ENCODE measurements at regions of chr3 and their contacts with region 1.

Region 1: DNA sequence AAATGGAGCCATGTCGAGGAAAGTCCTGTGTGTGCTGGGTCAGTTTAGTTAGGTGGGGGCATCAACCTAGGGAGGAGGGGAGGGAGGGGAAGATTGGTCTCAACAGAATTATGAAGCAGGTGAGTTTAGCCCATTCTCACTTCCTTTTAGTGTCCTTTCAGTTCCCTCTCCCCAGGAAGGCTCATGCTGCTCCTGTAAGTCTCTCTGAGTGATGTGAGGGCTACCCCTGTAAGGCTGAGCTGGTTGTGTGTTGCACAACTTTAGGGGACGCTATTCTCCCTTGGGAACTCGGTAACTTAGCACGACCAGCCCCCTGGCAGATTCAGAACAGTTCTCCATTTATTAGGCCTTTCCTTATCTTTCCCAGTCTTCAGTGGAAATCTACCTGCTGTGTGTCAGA is 21.2 kb downstream of the IL5RA start:
- DNase-seq: peak; percentile 79
- H3K4me3 ChIP-seq: no peak overlapping the region
- H3K27ac ChIP-seq: no peak overlapping the region
- H3K4me1 ChIP-seq: peaks cover 29% of the 10 kb centered on the region
- CTCF ChIP-seq: peak; percentile 67

Region 2: DNA sequence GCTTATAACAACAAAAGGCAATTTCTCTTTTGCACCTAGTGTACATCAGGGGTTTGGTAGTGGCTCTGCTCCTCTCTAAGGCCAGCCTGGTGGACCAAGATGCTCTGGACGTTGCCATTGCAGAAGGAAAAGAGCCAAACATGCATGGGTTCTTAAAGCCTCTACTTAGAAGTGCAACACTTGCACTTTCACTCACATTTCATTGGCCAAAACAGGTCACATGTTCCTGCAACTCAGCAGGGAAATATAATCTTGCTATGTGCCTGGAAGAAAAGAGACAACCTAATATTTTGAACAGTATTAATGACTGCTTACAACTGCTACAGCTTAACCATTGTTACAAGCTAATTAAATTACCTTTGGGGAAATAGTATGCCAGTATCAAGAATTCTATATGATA is 161.8 kb before region 1 on chr3:
- CTCF ChIA-PET with region 1: no interaction called
- POLR2A ChIA-PET with region 1: no interaction called
- intact Hi-C with region 1: no loop called
- DNase-seq: no peak
- H3K4me3 ChIP-seq: no peak overlapping the region
- H3K27ac ChIP-seq: no peak overlapping the region
- H3K4me1 ChIP-seq: no peaks in the 10 kb centered on the region
- CTCF ChIP-seq: no peak

Region 3: GRCh38 chr3:3126477-3127431 is 37.7 kb after region 1 on chr3 and contains the start of gene TRNT1:
- CTCF ChIA-PET with region 1: no interaction called
- POLR2A ChIA-PET with region 1: interaction called, 9 read pairs
- intact Hi-C with region 1: loop called (anchors 2 kb)
- DNase-seq: peak; percentile 94
- H3K4me3 ChIP-seq: peak within 1 kb of the TSS; percentile 91
- H3K27ac ChIP-seq: peak within 1 kb of the TSS; percentile 60
- H3K4me1 ChIP-seq: peaks cover 20% of the 10 kb centered on the region
- CTCF ChIP-seq: no peak
- total RNA-seq, gene TRNT1: 46.5 and 64.4 TPM in 2 replicates

Region 4: DNA sequence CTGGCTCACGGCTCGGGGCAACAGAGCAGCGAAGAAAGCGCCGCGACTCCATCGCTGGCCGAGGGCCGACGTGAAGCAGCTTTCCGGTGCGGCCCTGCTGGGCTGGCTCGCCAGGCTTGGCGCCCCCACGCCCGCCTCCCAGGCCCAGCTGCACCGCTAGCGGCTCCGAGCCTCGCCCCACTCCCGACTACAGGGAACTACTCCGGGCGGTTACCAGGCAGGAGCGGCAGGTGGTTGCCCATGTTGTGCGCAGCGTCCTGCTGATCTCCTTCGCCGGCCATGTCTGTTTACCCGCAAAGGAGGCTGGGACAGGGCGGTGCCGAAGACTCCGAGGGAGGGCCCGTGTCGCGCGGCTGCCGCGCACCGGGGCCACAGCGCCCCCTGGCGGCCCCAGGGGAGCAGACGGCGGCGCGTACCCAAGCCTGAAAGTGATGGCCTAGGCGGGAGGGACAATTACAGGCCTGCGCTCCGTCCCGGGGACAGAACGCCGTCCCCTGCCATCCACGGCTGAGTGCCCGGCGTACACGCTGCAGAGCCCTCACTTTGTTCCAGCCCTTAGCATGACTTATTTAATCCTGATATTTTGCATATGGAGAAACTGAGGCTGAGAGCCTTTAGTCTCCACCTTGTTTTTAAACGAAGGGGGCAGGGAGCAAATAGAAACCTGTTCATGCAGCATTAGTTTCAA is 90.5 kb after region 1 on chr3 and contains the start of gene CRBN:
- CTCF ChIA-PET with region 1: no interaction called
- POLR2A ChIA-PET with region 1: no interaction called
- intact Hi-C with region 1: loop called (anchors 5 kb)
- DNase-seq: peak; percentile 88
- H3K4me3 ChIP-seq: peak within 1 kb of the TSS; percentile 89
- H3K27ac ChIP-seq: no peak within 1 kb of the TSS
- H3K4me1 ChIP-seq: peaks cover 19% of the 10 kb centered on the region
- CTCF ChIP-seq: peak; percentile 90
- total RNA-seq, gene CRBN: 21.5 and 23.5 TPM in 2 replicates

Region 5: DNA sequence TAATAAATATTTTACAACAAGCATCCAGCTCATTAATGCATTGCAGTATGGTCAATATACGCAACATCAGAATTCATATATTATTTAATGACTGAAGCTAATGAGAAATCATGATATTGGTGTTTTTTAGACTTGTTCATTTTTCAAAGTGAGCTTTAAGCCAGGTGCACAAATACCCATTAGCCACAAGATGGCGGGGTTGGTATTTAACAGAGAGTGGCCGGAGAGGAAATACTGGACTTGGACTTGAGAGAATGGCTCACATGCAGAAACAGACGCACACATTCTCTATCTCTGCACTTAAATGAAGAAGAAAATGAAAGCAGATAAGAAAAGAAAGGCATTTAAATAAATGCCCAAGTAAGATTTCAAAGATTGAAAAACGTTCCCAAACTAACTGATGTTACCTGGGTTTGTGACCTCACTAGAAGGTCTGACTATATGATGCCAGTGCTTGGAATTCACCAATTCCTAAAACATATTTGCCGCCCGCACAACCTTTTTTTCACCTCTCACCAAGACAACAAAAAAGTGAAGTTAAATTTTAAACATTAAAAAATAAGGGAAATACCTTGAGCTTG is 111.7 kb after region 1 on chr3:
- CTCF ChIA-PET with region 1: no interaction called
- POLR2A ChIA-PET with region 1: no interaction called
- intact Hi-C with region 1: no loop called
- DNase-seq: peak; percentile 63
- H3K4me3 ChIP-seq: no peak overlapping the region
- H3K27ac ChIP-seq: no peak overlapping the region
- H3K4me1 ChIP-seq: no peaks in the 10 kb centered on the region
- CTCF ChIP-seq: peak; percentile 95